ENCODE measurements at regions of chr5 and their contacts with region 1.

Region 1: GRCh38 chr5:131634996-131635754 is at the start of gene RAPGEF6:
- DNase-seq: peak; percentile 88 to 100
- ATAC-seq: peak; percentile 92 to 97
- H3K4me3 ChIP-seq: peak within 1 kb of the TSS; percentile 72
- H3K27ac ChIP-seq: peak within 1 kb of the TSS; percentile 95 to 97
- H3K4me1 ChIP-seq: peaks cover 39% of the 10 kb centered on the region
- CTCF ChIP-seq: no peak
- EP300 ChIP-seq: no peak
- POLR2A ChIP-seq: peak; percentile 81
- RAD21 ChIP-seq: no peak
- polyA plus RNA-seq, gene RAPGEF6: 14.1 and 15.2 TPM in 2 replicates

Region 2: DNA sequence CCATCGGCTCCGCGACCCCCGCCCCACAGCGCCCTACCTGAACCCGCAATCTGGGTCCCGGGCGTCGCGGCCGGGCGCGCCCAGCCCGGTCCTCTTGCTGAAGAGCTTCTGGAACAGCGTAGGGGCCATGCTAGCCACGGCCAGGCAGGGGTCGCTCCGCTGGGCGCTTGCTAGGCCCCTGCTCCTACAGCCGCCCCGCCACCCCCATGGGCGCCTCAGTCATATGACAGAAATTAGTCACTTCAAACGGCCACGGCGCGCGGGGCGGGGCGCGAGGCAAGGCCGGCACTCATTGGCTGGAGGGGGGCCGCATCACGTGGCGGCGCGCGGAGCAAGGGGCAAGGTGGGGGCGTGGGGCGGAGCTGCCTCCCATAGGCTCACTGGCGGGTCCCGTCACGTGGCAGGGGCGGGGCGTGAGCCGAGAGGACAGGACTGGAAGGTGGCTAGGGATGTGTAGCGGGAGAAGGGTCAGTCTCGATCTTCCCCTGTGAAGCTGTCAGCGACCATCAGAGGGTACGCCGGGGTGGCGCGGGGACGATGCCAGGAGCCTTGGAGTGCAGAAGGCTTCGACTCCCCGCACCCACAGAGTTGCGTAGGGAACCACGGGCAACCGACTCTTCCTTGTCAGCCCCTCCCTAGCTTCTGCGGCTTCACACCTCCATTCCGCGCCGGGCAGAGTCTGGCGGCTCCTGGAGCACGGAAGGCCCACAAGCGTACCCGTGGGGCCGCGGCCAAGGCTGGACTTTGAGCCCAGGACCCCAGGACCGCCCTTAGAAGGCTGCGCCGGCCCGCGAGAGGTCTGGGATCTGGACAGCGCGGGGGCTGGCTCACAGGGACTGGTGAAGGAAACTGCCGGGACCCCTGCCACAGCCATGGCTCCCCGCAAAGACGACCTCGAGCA is 161.9 kb after region 1 on chr5 and contains the start of gene FNIP1:
- CTCF ChIA-PET with region 1: no interaction called
- POLR2A ChIA-PET with region 1: interaction called, 11 read pairs
- DNase-seq: peak; percentile 97 to 99
- ATAC-seq: peak; percentile 93 to 97
- H3K4me3 ChIP-seq: peak within 1 kb of the TSS; percentile 76
- H3K27ac ChIP-seq: peak within 1 kb of the TSS; percentile 90 to 97
- H3K4me1 ChIP-seq: peaks cover 18% of the 10 kb centered on the region
- CTCF ChIP-seq: no peak
- EP300 ChIP-seq: no peak
- POLR2A ChIP-seq: peak; percentile 79
- RAD21 ChIP-seq: no peak
- polyA plus RNA-seq, gene FNIP1: 9.6 and 10.2 TPM in 2 replicates

Region 3: DNA sequence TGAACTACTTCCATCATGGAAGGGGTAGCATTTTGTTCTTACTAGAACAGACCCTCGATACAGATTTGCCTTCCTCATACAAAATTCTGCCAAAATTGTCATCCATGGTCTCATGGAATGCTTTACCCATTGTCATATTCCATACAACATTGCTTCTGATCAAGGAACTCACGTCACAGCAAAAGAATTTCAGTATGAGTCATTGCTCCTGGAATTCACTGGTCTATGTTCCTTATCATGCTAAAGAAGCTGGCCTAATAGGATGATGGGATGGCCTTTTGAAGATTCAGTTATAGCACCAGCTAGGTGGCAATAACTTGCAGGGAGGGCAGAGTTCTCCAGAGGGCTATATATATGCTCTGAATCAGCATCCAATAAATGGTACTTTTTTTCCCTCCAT is 179.8 kb after region 1 on chr5:
- CTCF ChIA-PET with region 1: no interaction called
- POLR2A ChIA-PET with region 1: no interaction called
- DNase-seq: peak; percentile 27 to 55
- ATAC-seq: peak; percentile 63 to 74; a peak in 4 of 6 replicates
- H3K4me3 ChIP-seq: no peak overlapping the region
- H3K27ac ChIP-seq: 0 out of 6 replicates have a peak overlapping the region, but pooled peaks of 1 of the 2 experiments have one; percentile 40
- H3K4me1 ChIP-seq: peaks cover 5% of the 10 kb centered on the region; the same call in 1 of the 3 replicates
- CTCF ChIP-seq: no peak
- EP300 ChIP-seq: no peak
- POLR2A ChIP-seq: no peak
- RAD21 ChIP-seq: no peak

Measured in A549 (cell line).